Heart left ventricle (tissue), 16 donors: ENCODE measurements at regions of chr16 and their contacts with region 1.

Region 1: DNA sequence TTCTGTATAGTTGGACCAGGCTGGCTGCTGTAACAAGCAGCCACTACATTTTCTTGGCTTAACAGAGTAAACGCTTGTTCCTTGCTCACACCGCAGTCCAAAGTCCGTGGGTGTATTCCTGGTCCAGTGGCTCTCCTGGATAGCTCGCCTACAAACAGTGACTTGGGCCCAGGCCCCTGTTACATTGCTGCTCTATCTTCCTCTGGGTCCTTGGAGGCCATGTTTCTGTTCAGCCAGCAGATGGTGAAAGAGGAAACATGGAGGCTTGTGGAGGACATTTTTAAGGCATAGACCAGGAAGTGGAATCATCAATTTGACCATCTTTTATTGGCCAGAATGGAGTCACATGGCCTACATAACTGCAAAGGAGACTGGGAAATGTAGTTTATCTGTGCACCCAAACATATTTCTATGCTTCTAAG is 55.1 kb downstream of the ATP2C2 start:
- DNase-seq: no peak
- ATAC-seq: no peak
- H3K4me3 ChIP-seq: no peak overlapping the region
- H3K27ac ChIP-seq: no peak overlapping the region
- H3K4me1 ChIP-seq: no peaks in the 10 kb centered on the region
- H3K27me3 ChIP-seq: peaks cover 0 to 9% (median 0%) of the 10 kb centered on the region in 9 donors
- CTCF ChIP-seq: no peak
- POLR2A ChIP-seq: no peak

Region 2: DNA sequence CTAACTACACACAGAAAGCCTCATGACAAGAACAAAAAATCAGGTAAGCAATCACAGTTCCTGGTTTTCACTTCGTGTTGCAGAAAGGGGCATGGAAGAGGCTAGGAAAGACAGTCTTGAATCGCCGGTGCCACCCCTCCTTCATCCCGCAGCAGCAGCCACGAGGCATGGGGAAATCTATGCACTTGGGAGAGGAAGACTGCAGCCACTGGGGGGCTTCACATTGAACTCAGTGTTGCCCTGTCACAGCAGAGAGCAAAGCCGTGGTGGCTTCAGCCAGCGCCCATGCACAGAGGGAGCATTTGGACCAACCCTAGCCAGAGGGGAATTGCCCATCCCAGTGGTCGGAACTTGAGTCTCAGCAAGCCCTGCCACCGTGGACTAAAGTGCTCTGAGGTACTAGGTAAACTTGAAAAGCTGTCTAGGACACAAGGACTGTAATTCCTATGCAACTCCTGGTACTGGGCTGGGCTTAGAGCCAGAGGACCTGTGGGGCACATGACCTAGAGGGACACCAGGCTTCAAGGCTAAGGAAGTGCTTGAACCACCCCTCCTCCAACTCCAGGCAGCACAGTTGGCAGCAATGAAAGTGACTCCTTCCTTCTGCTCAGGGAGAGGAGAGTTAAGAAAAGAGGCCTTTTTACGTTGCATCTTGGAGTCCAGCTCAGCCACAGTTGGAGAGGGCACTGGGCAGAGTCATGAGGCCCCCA is 90.3 kb before region 1 on chr16:
- intact Hi-C with region 1: loop called in 1 of 10 experiments (anchors 5 kb)
- DNase-seq: no peak
- ATAC-seq: peak in 2 of 4 donors; percentile 30 to 57
- H3K4me3 ChIP-seq: no peak overlapping the region
- H3K27ac ChIP-seq: no peak overlapping the region
- H3K4me1 ChIP-seq: no peaks in the 10 kb centered on the region
- H3K27me3 ChIP-seq: no peaks in the 10 kb centered on the region
- CTCF ChIP-seq: no peak
- POLR2A ChIP-seq: no peak

Region 3: DNA sequence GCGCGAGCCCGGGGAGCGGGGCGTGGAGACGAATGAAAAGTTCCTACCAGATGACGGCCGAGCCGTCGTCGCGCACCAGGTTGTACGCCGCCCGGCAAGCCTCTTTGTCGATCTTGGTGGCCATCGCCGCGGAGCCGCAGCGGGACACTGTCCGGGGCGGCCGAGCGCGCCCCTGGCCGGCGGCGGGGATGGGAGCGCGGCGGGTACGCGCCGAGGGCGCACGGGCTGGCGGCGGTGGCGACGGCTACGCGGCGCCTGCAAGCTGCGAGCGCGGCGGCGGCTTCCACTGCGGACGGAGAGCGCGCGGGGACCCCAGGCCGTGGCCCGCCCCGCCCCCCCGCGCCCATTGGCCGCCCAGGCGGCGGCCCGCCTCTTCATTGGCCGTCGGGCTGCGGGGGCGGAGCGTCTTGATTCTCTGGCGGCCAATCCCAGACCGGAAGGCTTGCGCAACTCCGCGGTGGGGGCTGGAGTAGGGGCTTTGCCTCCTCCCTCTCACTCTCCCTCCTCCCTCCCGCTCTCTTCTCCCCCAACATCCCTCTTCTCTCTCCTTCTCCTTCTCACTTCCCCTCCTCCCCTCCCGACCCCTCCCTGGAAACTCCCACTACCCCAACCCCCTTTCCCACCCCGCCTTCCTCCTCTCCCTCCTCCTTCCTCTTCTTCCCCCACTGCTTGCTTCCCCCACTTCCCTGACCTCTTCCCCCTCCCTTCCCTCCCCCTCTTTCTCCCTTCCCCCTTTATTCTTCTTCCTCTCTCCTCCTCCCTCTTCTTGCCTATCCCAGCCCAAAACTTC is 194.6 kb after region 1 on chr16 and contains the start of gene COTL1:
- intact Hi-C with region 1: no loop called
- DNase-seq: peak; percentile 96 to 99 (median 97)
- ATAC-seq: peak; percentile 89 to 96 (median 93)
- H3K4me3 ChIP-seq: peak within 1 kb of the TSS; percentile 31 to 96 (median 74)
- H3K27ac ChIP-seq: peak within 1 kb of the TSS in 11 of 12 donors; percentile 37 to 87 (median 57)
- H3K4me1 ChIP-seq: peaks cover 0 to 57% (median 12%) of the 10 kb centered on the region in 12 donors
- H3K27me3 ChIP-seq: peaks cover 0 to 8% (median 0%) of the 10 kb centered on the region in 9 donors
- CTCF ChIP-seq: no peak
- POLR2A ChIP-seq: peak in 1 of 2 donors; percentile 54
- total RNA-seq, gene COTL1: 6.8 to 120 (median 11.0) TPM